Right lobe of liver (tissue), 6 donors: ENCODE measurements at regions of chr22 and their contacts with region 1.

Region 1: GRCh38 chr22:35930933-35931332 is 97.7 kb downstream of the RBFOX2 start:
- DNase-seq: no peak
- ATAC-seq: peak; percentile 94 to 99 (median 98)
- H3K4me3 ChIP-seq: no peak overlapping the region
- H3K27ac ChIP-seq: no peak overlapping the region
- H3K4me1 ChIP-seq: peaks cover 0 to 14% (median 0%) of the 10 kb centered on the region in 4 donors
- H3K27me3 ChIP-seq: no peaks in the 10 kb centered on the region
- CTCF ChIP-seq: peak; percentile 68 to 89 (median 70)
- POLR2A ChIP-seq: no peak

Region 2: DNA sequence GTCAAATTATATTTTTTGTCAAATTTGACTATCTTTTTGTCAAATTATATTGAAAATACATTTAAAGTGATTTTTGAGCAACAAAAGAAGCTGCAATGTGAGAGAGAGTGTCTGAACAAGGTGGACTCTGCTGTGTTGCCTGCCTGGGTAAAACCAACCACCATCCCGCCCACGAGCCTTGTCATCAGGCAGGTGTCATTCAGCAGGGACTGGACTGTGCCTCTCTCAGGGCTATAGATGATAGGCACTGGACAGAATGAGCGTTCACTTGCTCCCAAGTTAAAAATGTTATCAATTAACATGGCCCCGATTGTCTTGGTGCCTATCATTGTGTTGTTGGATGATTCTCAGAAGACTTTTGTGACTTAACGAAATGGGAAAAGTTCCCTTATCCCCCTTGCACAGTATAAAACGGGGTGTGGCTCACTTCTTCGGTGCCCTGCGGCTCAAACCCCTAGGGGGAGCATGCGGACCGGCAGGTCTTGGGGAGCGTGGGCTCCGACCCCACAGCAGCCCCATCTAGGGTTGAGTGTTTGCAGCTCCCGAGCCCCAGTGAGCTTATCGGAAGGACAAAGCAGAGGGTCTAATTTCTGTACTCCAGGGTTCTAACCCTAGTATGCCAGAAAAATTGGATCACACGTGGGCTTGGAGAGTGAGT is 211.6 kb before region 1 on chr22:
- intact Hi-C with region 1: no loop called
- DNase-seq: no peak
- ATAC-seq: no peak
- H3K4me3 ChIP-seq: no peak overlapping the region
- H3K27ac ChIP-seq: no peak overlapping the region
- H3K4me1 ChIP-seq: no peaks in the 10 kb centered on the region
- H3K27me3 ChIP-seq: no peaks in the 10 kb centered on the region
- CTCF ChIP-seq: no peak
- POLR2A ChIP-seq: no peak

Region 3: DNA sequence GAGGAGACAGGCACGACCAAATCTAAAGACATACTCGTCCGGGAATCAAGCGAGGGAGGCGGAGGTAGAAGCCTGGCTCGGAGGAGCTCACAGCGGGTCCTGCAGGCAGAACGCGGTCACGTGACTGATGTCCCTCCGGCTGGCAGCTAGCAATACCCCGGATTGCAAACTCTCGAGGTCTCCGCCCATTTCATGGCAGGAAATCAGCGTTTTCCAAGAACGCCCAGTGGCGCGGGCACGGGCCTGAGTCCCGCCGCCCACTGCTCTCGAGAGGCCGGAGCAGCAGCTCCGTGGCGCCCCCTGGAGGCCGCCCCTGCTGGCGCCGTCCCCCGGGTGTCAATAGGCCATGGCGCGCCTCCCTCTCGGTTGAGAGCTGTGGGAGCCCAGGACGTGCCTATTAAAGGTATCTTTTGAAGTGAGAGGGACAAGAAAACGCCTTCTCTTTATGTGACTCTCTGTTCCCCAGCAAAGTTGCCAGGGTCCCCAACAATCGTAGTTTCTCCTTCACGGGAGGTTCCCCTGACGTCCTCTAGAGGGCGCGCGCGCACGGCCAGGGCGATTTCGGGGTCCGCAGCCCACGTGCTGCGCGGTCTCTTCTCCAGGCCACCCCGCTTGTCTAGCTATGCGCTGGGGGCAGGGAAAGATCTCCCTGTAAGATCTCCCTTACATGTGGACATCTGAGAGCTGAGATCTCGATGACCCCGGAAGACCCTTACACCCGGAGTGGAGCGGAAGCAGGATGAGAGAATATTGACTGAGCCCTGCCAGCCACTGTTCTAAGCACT is 135.0 kb after region 1 on chr22:
- intact Hi-C with region 1: loop called in 1 of 2 experiments (anchors 10 kb)
- DNase-seq: peak; percentile 92 to 97 (median 95)
- ATAC-seq: peak; percentile 93 to 97 (median 96)
- H3K4me3 ChIP-seq: peak overlapping the region; percentile 50 to 59 (median 58)
- H3K27ac ChIP-seq: peak overlapping the region; percentile 86 to 90 (median 88)
- H3K4me1 ChIP-seq: peaks cover 0 to 7% (median 0%) of the 10 kb centered on the region in 4 donors
- H3K27me3 ChIP-seq: no peaks in the 10 kb centered on the region
- CTCF ChIP-seq: peak; percentile 99 to 100 (median 100)
- POLR2A ChIP-seq: peak; percentile 76

Region 4: GRCh38 chr22:36244522-36245391 is 313.8 kb after region 1 on chr22:
- intact Hi-C with region 1: no loop called
- DNase-seq: no peak
- ATAC-seq: no peak
- H3K4me3 ChIP-seq: no peak overlapping the region
- H3K27ac ChIP-seq: no peak overlapping the region
- H3K4me1 ChIP-seq: peaks cover 0 to 22% (median 0%) of the 10 kb centered on the region in 4 donors
- H3K27me3 ChIP-seq: no peaks in the 10 kb centered on the region
- CTCF ChIP-seq: no peak
- POLR2A ChIP-seq: no peak